Sigmoid colon (tissue), 7 donors: ENCODE measurements at regions of chr3 and their contacts with region 1.

Region 1: GRCh38 chr3:194486540-194487288 is at the start of gene ATP13A3:
- DNase-seq: peak; percentile 95
- H3K4me3 ChIP-seq: peak within 1 kb of the TSS; percentile 60 to 78 (median 75)
- H3K27ac ChIP-seq: peak within 1 kb of the TSS; percentile 83 to 88 (median 88)
- H3K4me1 ChIP-seq: peaks cover 0 to 29% (median 24%) of the 10 kb centered on the region in 4 donors
- H3K27me3 ChIP-seq: no peaks in the 10 kb centered on the region
- CTCF ChIP-seq: no peak
- EP300 ChIP-seq: peak in 1 of 4 donors; percentile 36
- POLR2A ChIP-seq: peak; percentile 48 to 63
- total RNA-seq, gene ATP13A3: 50.4 to 82.7 (median 68.2) TPM

Region 2: DNA sequence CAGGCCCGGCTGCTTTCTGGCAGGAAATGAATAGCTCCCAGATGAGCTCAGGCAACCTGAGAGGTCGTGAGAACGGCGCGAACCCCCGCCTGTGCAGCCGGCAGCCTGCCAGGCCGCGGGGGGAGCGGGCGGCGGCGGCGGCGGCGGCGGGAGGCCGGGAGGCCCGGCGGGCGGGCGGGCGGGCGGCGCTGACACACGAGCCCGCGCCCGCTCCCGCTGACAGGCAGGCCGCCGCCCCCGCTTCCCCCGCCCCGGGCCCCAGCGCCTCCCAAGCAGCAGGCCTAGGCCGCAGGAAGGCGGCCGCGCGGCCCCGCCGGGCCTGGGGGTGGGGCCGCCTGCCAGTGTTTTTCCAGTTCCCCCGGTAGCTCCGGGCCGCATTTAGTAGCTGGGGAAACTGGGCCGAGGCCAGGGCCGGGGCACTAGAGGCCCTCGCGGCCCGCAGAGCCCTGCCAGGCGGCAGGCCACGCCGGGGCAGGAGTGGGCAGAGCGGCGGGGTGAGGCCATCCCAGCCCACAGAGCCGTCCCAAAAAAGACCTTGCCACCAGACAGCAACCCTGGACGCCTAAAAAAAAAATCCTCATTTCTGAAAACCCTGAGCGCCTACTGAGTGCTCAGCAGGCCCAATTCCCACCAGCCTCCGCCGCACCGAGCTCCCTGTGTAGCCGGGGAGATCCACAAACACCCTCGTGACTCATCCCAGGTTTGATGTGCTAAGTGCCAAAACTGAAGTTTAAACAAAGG is 345.1 kb before region 1 on chr3:
- intact Hi-C with region 1: loop called (anchors 2 kb)
- DNase-seq: peak; percentile 96
- H3K4me3 ChIP-seq: peak overlapping the region; percentile 10 to 48 (median 42)
- H3K27ac ChIP-seq: peak overlapping the region; percentile 90 to 99 (median 96)
- H3K4me1 ChIP-seq: peaks cover 0 to 61% (median 53%) of the 10 kb centered on the region in 4 donors
- H3K27me3 ChIP-seq: no peaks in the 10 kb centered on the region
- CTCF ChIP-seq: no peak
- EP300 ChIP-seq: peak in 1 of 4 donors; percentile 64
- POLR2A ChIP-seq: no peak

Region 3: DNA sequence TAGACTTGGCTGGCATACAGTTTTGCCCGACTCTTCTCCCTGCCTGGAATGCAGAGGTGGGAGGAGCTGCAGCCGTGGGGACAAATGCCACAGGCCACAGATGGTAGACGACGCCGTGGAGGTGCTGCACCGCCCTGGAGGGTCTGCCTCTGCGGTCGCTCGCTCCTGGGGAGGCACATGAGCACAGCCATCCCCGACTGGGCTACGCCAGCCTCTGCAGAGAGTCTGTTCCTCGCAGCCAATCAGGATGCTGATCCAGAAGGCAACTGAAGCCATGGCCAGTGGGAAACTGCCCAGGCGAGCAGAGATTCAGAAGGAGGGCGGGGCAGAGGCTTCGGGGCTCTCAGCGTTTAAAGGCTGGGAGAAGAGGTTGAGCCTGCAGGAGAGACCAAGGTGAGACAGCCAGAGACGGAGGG is 105.2 kb before region 1 on chr3:
- intact Hi-C with region 1: no loop called
- DNase-seq: no peak
- H3K4me3 ChIP-seq: peak overlapping the region in 1 of 4 donors; percentile 12
- H3K27ac ChIP-seq: no peak overlapping the region
- H3K4me1 ChIP-seq: peaks cover 0 to 6% (median 3%) of the 10 kb centered on the region in 4 donors
- H3K27me3 ChIP-seq: peaks cover 0 to 7% (median 0%) of the 10 kb centered on the region in 3 donors
- CTCF ChIP-seq: no peak
- EP300 ChIP-seq: no peak
- POLR2A ChIP-seq: no peak

Region 4: GRCh38 chr3:194472290-194472920 is 14.3 kb before region 1 on chr3:
- intact Hi-C with region 1: no loop called
- DNase-seq: no peak
- H3K4me3 ChIP-seq: no peak overlapping the region
- H3K27ac ChIP-seq: no peak overlapping the region
- H3K4me1 ChIP-seq: peaks cover 0 to 15% (median 5%) of the 10 kb centered on the region in 4 donors
- H3K27me3 ChIP-seq: no peaks in the 10 kb centered on the region
- CTCF ChIP-seq: peak; percentile 88 to 96 (median 95)
- EP300 ChIP-seq: no peak
- POLR2A ChIP-seq: no peak

Region 5: GRCh38 chr3:194583604-194584318 is 97.0 kb after region 1 on chr3:
- intact Hi-C with region 1: loop called (anchors 2 kb)
- DNase-seq: peak; percentile 96
- H3K4me3 ChIP-seq: peak overlapping the region; percentile 73 to 91 (median 76)
- H3K27ac ChIP-seq: peak overlapping the region; percentile 91 to 93 (median 92)
- H3K4me1 ChIP-seq: peaks cover 0 to 13% (median 8%) of the 10 kb centered on the region in 4 donors
- H3K27me3 ChIP-seq: no peaks in the 10 kb centered on the region
- CTCF ChIP-seq: no peak
- EP300 ChIP-seq: no peak
- POLR2A ChIP-seq: peak; percentile 81 to 90